ENCODE measurements at regions of chr5 and their contacts with region 1.

Region 1: DNA sequence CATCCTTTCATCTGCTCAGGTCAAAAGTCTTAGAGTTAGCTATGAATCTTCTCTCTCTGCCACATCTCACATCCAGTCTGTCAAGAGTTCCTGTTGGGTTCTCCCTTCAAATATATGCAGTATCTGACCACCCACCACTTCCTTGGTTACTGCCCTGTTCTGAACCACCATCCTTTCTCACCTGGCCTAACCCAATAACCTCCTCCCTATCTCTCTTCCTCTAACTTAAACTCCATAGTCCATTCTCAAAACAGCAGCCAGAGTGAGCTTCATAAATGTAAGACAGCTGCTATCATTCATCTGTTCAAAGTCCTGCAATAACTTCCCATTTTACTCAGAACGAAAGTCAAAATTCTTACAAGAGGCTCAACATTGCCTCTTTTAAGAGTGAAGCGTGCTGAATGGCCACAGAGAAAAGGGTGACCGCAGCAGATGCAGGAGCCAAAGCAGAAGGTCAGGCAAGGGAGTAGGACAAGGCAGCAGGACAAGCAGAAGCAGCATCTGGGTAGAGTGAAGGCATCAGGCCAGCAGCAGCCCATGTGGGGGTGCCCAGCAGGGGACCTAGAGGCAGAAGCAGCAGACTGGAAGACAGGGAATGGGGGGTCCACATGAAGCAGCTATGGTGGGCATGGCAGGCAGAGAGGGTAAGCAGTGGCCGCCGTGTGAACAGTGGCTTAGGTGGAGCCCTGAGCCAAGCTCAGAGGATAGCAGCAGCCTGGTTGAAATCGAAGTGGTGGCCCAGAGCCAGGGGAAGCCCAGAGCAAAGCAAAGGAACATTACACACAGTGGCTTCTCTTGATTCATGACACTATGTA is 39.3 kb upstream of the CDC42SE2 start:
- DNase-seq: peak; percentile 34
- H3K4me3 Mint-ChIP-seq: no peak overlapping the region
- H3K27ac Mint-ChIP-seq: no peak overlapping the region
- H3K4me1 Mint-ChIP-seq: peaks cover 12% of the 10 kb centered on the region
- H3K27me3 Mint-ChIP-seq: no peaks in the 10 kb centered on the region

Region 2: DNA sequence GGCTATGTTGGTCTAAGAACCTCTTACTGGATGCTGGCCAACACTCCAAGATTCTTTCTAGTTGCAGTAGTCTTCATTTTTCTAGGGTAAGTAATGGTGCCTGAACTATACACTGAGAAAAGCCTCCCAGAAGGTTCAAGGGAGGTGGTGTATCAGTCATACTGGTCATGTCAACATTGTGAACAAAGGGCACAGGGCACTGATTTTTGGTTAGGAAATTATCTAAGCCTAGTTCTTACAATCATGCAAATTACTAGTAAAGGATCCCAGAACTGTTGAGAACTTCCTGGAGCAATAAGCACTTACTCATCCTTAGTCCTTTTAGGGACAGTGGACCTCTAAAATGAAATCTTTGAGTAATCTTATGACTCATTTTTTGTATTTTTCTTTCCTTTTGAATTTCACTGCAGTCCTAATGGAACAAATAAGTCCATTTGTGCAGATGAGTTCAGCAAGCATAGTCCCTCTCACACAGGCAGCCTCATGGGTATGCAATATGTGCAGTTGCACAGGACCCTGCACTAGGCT is 18.2 kb after region 1 on chr5:
- CTCF ChIA-PET with region 1: no interaction called
- POLR2A ChIA-PET with region 1: interaction called, 4 read pairs
- intact Hi-C with region 1: loop called (anchors 1 kb)
- DNase-seq: peak; percentile 28
- H3K4me3 Mint-ChIP-seq: no peak overlapping the region
- H3K27ac Mint-ChIP-seq: peak overlapping the region; percentile 49
- H3K4me1 Mint-ChIP-seq: peaks cover 8% of the 10 kb centered on the region
- H3K27me3 Mint-ChIP-seq: no peaks in the 10 kb centered on the region

Measured in activated CD4-positive, alpha-beta memory T cell treated with anti-CD3 and anti-CD28 coated beads for 36 hours (primary cell).